ENCODE measurements at regions of chr20 and their contacts with region 1.

Region 1: DNA sequence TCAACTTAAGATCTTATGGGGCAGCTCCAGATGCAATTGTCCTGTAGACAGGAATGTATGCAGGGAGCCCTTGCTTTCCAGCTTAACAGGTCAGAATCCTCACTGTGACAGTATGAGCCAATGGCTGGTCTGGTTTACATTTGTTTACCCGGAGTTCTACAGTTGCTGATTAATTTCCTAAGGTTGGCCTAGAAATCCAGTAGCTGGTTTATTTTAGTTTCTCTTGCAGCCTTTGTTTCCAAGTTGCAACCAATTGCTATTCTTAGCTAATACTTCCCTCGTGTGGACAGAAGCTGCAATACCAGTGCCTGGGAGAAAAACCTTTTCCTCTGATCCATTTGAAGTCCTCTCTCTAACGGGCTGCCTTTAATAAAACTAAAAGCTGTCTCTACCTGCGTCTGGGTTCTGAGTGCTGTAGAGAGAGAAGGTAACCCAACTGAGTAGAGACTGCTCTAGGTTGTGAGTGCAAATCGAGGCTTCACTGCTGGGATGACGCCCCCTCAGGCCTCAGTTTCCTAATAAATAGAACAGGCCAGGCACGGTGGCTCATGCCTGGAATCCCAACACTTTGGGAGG is 45.9 kb downstream of the ZNF217 start:
- DNase-seq: no peak
- ATAC-seq: peak; percentile 89

Region 2: GRCh38 chr20:52242237-52243230 is 1305.2 kb before region 1 on chr20:
- intact Hi-C with region 1: loop called (anchors 10 kb)
- DNase-seq: no peak
- ATAC-seq: no peak

Region 3: DNA sequence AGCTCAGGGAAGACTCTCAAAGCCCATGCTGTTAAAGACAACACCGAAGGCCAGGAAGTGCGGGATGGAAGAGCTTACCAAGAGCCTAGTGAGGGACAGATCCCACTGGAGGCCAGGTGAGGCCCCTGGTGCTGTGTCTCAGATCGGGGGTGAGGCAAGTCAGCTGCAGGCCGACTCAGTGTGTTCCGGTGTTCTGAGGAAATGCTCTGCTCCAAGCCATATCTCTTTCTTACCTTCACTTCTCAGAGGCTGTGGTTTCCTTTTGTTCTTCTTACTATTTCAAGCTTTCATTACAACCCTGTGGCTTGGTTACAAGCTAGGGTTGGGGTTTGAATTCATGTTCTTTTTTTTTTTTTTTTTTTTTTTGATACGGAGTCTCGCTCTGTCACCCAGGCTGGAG is 1241.9 kb before region 1 on chr20:
- intact Hi-C with region 1: loop called (anchors 10 kb)
- DNase-seq: no peak
- ATAC-seq: no peak

Region 4: DNA sequence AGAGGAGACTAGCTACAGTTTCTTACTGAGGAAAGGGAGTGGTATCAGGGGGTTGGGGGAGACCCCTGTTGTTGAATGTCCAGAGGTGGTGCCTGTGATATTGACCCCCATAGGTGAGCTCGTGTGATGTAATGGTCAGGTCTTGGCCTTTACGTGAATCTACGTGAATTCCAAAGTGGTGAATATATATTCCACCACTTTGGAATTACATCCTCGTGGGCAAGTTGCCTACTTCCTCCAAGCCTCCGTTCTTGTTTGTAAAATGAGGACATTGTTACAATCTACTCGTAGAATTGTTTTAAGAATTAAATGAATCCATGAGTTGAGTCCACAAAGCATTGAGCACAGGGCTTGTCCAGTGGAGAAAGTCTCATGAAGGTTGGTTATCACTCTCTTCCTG is 528.3 kb before region 1 on chr20:
- intact Hi-C with region 1: no loop called
- DNase-seq: no peak
- ATAC-seq: no peak

Measured in Right ventricle myocardium superior (tissue), 1 donor.